ENCODE measurements at regions of chr2 and their contacts with region 1.

Region 1: DNA sequence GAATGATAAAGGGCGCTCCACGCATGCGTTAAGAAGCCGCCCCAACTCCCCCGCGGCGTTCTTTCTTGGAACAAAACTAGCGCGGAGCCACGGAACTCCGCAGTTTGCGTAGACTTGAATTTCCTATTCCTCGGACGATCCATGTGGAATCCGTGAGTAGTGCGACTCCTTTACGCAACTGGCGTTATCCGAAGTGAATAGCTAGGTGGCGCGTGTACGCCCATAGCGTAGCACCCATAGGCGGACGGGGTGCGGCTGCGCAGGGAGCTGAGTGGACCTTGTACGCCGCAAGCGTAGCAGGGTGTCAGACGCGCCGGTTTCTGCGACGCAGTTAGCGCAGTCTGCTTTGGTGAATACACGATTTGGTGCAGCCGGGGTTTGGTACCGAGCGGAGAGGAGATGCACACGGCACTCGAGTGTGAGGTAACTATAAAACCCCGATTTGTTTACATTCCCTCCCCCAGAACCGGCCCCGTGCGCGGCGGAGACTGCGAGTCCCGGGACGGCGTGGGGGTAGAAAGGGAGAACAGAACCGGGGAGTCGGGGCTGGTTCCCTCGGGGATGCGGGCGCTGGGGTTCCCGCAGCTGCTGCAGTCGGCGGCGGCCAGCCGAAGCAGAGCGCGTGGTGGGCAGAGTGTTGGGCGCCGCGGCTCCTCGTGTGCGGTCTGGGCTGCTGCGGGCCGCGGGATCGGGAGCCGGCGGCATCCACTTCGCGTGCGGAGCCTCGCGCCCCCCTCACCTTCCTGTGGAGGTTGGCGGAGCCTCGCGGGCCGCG is at the start of gene SLC39A10:
- DNase-seq: peak; percentile 92 to 98 (median 97)
- H3K4me3 ChIP-seq: peak within 1 kb of the TSS; percentile 81
- H3K4me3 Mint-ChIP-seq: peak within 1 kb of the TSS; percentile 95 to 100 (median 99)
- H3K27ac ChIP-seq: peak within 1 kb of the TSS; percentile 98
- H3K27ac Mint-ChIP-seq: peak within 1 kb of the TSS; percentile 96 to 100 (median 99)
- H3K4me1 ChIP-seq: peaks cover 17% of the 10 kb centered on the region
- H3K4me1 Mint-ChIP-seq: peaks cover 38 to 45% (median 43%) of the 10 kb centered on the region in 3 donors
- H3K27me3 ChIP-seq: no peaks in the 10 kb centered on the region
- H3K27me3 Mint-ChIP-seq: peaks cover 0 to 9% of the 10 kb centered on the region in 2 donors
- total RNA-seq, gene SLC39A10: 22.2 to 23.6 TPM

Region 2: GRCh38 chr2:195498176-195498575 is 158.9 kb before region 1 on chr2:
- CTCF ChIA-PET with region 1: interaction called, 120 read pairs
- POLR2A ChIA-PET with region 1: interaction called, 18 read pairs
- DNase-seq: peak; percentile 35 to 78 (median 53)
- H3K4me3 ChIP-seq: no peak overlapping the region
- H3K4me3 Mint-ChIP-seq: no peak overlapping the region
- H3K27ac ChIP-seq: no peak overlapping the region
- H3K27ac Mint-ChIP-seq: peak overlapping the region in 3 of 8 donors; percentile 17 to 66 (median 54)
- H3K4me1 ChIP-seq: peaks cover 15% of the 10 kb centered on the region
- H3K4me1 Mint-ChIP-seq: peaks cover 18 to 52% (median 37%) of the 10 kb centered on the region in 3 donors
- H3K27me3 ChIP-seq: no peaks in the 10 kb centered on the region
- H3K27me3 Mint-ChIP-seq: peaks cover 0 to 1% of the 10 kb centered on the region in 2 donors

Region 3: DNA sequence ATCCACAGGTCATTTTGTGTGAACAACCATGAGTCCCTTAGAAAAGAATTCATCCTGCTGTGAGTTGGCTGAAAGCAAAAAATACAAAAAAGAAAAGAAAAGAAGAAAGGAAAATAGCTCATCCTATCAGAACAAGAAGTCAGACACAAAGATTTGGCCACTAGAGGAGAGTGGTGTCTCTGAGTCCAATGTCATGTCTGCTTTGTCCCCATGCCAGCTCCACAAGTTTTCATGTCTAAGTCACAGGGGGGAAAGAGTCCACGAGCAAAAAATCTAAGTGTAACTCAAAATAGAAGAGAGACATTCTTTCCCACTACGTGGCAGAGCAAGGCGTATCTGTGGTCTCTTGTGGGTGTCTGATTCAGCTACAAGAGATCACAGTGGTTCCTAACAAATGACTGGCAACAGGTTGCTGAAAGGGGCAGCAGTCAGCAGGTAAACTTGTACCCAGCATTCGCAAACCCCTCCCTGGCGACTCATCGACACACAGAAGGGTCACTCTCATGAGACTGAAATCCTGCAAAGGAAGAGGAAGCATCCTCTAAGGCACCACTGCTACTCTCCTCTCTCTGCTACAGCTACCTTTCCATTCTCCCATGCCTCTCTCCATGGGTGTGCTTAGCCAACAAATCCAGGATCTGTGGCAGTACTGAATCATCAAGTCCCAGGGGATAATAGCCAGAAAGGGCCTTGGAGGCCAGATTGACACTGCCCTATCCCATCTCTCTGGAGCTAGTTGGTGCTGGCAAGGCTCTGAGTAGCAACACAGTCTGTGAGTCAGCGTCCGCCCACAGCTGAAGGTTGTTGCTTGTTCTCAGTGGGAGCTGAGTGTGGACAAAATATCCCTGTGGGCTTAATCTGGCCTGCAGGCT is 123.0 kb before region 1 on chr2:
- CTCF ChIA-PET with region 1: interaction called, 38 read pairs
- POLR2A ChIA-PET with region 1: interaction called, 72 read pairs
- DNase-seq: peak; percentile 10 to 72 (median 43)
- H3K4me3 ChIP-seq: peak overlapping the region; percentile 65
- H3K4me3 Mint-ChIP-seq: peak overlapping the region; percentile 75 to 86 (median 79)
- H3K27ac ChIP-seq: peak overlapping the region; percentile 19
- H3K27ac Mint-ChIP-seq: peak overlapping the region; percentile 83 to 97 (median 92)
- H3K4me1 ChIP-seq: peaks cover 78% of the 10 kb centered on the region
- H3K4me1 Mint-ChIP-seq: peaks cover 83 to 89% (median 89%) of the 10 kb centered on the region in 3 donors
- H3K27me3 ChIP-seq: no peaks in the 10 kb centered on the region
- H3K27me3 Mint-ChIP-seq: no peaks in the 10 kb centered on the region

Region 4: DNA sequence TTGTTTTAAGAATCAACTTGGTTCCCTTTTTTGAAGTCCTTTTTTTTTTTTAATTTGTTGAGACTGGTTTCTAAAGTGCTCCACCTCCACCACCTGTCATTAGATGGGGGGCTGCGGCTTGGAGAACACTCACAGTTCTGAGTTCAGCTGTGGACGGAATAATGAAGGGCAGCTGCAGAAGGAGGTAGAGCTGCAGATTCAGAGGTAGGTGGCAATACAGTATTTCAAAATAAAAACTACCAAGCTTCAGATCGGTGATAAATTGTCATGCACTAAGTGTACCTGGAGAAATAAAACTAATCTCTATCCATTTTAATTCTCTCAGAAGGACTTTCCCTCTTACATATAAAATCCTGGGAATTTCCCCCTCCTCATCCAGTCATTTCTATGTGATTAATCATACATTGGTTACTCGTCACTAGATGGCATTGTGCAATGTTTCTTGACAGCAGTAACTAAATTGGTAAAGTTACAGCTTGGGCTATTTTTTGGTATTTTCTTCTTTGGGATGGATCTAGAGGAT is 81.1 kb before region 1 on chr2:
- CTCF ChIA-PET with region 1: interaction called, 33 read pairs
- POLR2A ChIA-PET with region 1: interaction called, 15 read pairs
- DNase-seq: peak in 1 of 5 donors; percentile 21
- H3K4me3 ChIP-seq: no peak overlapping the region
- H3K4me3 Mint-ChIP-seq: peak overlapping the region in 6 of 7 donors; percentile 26 to 80 (median 52)
- H3K27ac ChIP-seq: no peak overlapping the region
- H3K27ac Mint-ChIP-seq: peak overlapping the region in 7 of 8 donors; percentile 18 to 84 (median 23)
- H3K4me1 ChIP-seq: peaks cover 49% of the 10 kb centered on the region
- H3K4me1 Mint-ChIP-seq: peaks cover 52 to 73% (median 69%) of the 10 kb centered on the region in 3 donors
- H3K27me3 ChIP-seq: no peaks in the 10 kb centered on the region
- H3K27me3 Mint-ChIP-seq: no peaks in the 10 kb centered on the region

Region 5: GRCh38 chr2:195805283-195805976 is 148.4 kb after region 1 on chr2:
- CTCF ChIA-PET with region 1: no interaction called
- POLR2A ChIA-PET with region 1: no interaction called
- DNase-seq: no peak
- H3K4me3 ChIP-seq: no peak overlapping the region
- H3K4me3 Mint-ChIP-seq: no peak overlapping the region
- H3K27ac ChIP-seq: no peak overlapping the region
- H3K27ac Mint-ChIP-seq: no peak overlapping the region
- H3K4me1 ChIP-seq: no peaks in the 10 kb centered on the region
- H3K4me1 Mint-ChIP-seq: no peaks in the 10 kb centered on the region
- H3K27me3 ChIP-seq: no peaks in the 10 kb centered on the region
- H3K27me3 Mint-ChIP-seq: peaks cover 3 to 11% of the 10 kb centered on the region in 2 donors

Measured in CD8-positive, alpha-beta memory T cell (primary cell).